HEK293 (cell line): ENCODE measurements at regions of chr17 and their contacts with region 1.

Region 1: DNA sequence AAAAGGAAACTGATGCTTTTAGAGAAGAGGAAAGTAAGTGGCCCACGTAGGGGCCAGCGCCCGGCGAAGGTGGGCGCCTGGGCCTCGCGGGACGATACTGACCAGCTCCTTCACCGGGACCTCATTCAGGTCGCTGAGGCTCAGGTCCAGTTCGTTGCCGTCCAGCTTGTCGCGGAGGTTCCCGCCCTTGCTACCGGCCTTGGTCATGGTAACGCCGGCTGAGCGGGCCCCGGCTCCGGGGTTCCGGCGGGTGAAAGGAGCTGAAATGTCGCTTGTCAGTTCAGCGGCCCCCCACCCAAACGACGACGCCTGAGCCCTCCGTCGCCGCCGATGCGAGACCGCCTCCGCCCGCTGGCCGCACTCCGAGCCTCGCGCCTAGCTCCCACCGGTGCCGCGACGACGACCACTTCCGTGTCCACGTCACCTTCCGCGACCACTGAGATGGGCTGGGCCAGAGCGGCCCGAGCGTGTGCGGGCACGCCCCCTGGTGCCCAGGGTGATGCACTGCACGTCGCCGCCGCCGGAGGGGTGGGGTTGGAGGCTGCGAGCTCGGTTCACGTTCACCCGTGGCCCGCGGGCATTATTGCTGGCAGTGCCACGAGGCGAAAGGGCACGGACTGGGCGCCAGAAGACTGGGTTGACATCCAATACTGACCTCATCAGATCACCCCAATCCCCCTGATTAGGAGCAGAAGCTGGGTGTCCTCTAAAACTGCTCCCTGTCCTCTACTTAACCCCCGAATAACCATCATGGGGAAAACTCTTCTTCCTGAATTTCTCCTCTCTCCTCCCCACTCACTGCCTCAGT is at the start of gene LRRC59:
- H3K4me3 ChIP-seq: peak within 1 kb of the TSS; percentile 74
- H3K27ac ChIP-seq: peak within 1 kb of the TSS; percentile 81
- H3K4me1 ChIP-seq: peaks cover 9% of the 10 kb centered on the region
- CTCF ChIP-seq: peak; percentile 100

Region 2: DNA sequence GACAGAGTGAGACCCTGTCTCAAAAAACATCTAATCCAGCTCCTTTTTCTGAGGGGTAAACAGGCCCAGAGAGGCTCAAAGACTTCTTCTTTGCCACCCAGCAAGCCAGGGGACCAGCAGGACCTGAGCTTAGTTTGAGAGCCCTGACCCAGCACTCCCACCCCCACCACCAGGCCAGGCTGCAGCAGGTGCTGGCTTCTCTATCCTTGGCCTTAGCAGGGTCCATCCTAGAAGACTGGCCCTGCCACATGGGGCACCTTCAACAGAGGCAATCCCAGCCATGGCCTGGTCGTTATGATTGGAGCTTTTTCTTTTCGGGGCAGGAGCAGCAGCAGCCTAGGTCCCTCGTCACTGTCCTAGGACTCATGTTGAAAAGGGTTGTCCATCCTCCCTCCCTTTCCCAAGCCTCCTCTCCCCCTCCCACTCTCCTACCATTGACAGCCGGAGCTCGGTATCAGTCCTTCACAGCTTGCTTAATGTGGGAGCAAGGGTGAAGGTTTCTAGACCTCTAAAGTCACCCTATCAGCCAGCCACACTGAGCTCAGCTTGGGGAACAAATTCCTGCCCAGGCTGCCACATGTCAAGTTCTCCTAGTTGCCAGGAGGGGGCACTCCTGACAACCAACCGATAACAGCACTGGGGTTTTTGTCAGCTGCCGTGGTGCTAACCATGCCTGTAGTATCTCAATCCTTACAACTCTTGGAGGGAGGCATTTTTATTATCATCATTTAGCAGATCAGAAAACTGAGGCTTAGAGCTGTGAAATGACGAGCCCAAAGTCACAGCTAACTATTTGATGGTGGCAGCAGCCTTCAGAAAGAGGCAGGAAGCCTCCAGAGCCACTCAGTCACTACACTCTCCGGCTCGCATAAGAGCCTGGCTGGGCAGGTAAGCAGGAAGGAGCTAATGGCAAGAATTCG is 35.5 kb before region 1 on chr17:
- CTCF ChIA-PET with region 1: interaction called, 54 read pairs
- POLR2A ChIA-PET with region 1: interaction called, 5 read pairs
- H3K4me3 ChIP-seq: no peak overlapping the region
- H3K27ac ChIP-seq: no peak overlapping the region
- H3K4me1 ChIP-seq: 0 out of 2 replicates have a peak, but pooled peaks cover 5% of the 10 kb centered on the region
- CTCF ChIP-seq: peak; percentile 72

Region 3: DNA sequence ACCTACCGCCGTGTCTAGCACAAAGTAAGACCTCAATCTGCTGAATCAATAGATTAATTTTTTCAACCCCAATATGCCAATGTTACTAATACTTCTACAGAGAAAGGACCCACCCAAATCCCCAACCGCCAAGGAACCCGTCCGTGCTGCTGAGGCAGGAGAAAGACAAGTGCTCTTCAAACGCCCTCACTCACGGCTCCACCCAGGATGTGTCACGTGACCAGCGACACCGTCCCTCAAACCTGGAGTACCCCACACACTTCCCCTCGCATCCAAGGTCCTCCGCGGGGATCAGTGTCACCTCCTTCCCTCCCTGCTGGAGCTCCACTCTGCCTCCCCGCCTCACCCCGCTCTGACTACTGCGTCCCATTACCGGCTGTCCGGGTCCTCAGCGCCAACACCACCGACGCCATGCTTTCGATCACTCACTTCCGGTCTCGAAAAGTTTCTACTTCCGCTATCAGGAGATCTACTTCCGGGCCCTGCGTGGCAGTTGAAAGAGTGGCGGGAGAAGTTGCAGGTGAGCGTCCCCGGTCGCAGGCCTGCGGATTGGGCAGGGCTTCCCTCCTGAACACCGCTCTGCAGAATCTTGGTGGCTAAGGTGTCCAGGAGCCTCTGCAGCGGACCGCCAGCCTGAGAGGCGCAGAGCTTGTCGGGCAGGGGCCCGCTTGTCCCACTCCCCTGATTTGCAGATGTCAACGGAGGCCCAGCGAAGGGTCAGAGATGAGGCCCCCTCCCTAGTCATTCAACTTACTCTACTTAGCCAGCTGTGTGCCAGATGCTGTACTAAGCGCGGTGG is 24.4 kb before region 1 on chr17 and contains the starts of genes EME1 and MRPL27:
- CTCF ChIA-PET with region 1: interaction called, 14 read pairs
- POLR2A ChIA-PET with region 1: interaction called, 41 read pairs
- H3K4me3 ChIP-seq: peak within 1 kb of the TSS; percentile 97
- H3K27ac ChIP-seq: peak within 1 kb of the TSS; percentile 86
- H3K4me1 ChIP-seq: peaks cover 8% of the 10 kb centered on the region
- CTCF ChIP-seq: no peak

Region 4: GRCh38 chr17:50386510-50386909 is 10.8 kb before region 1 on chr17:
- CTCF ChIA-PET with region 1: interaction called, 69 read pairs
- POLR2A ChIA-PET with region 1: interaction called, 41 read pairs
- H3K4me3 ChIP-seq: no peak overlapping the region
- H3K27ac ChIP-seq: peak overlapping the region; percentile 2; the same call in 1 of the 2 replicates
- H3K4me1 ChIP-seq: no peaks in the 10 kb centered on the region
- CTCF ChIP-seq: no peak

Region 5: GRCh38 chr17:50425682-50426471 is 28.6 kb after region 1 on chr17 and contains the start of gene ACSF2:
- CTCF ChIA-PET with region 1: interaction called, 71 read pairs
- POLR2A ChIA-PET with region 1: interaction called, 11 read pairs
- H3K4me3 ChIP-seq: peak within 1 kb of the TSS; percentile 72
- H3K27ac ChIP-seq: peak within 1 kb of the TSS; percentile 71
- H3K4me1 ChIP-seq: peaks cover 10% of the 10 kb centered on the region; the same call in 1 of the 2 replicates
- CTCF ChIP-seq: no peak

Region 6: GRCh38 chr17:50443368-50443971 is 46.2 kb after region 1 on chr17:
- CTCF ChIA-PET with region 1: interaction called, 17 read pairs
- POLR2A ChIA-PET with region 1: interaction called, 3 read pairs
- H3K4me3 ChIP-seq: no peak overlapping the region
- H3K27ac ChIP-seq: peak overlapping the region; percentile 32; the same call in 1 of the 2 replicates
- H3K4me1 ChIP-seq: peaks cover 20% of the 10 kb centered on the region
- CTCF ChIP-seq: no peak

Region 7: GRCh38 chr17:50478391-50479381 is 81.4 kb after region 1 on chr17 and contains the start of gene RSAD1:
- CTCF ChIA-PET with region 1: interaction called, 55 read pairs
- POLR2A ChIA-PET with region 1: interaction called, 30 read pairs
- H3K4me3 ChIP-seq: peak within 1 kb of the TSS; percentile 64
- H3K27ac ChIP-seq: peak within 1 kb of the TSS; percentile 88
- H3K4me1 ChIP-seq: peaks cover 6% of the 10 kb centered on the region
- CTCF ChIP-seq: peak; percentile 83; the same call in 1 of the 2 replicates